ENCODE measurements at regions of chr12 and their contacts with region 1.

Region 1: DNA sequence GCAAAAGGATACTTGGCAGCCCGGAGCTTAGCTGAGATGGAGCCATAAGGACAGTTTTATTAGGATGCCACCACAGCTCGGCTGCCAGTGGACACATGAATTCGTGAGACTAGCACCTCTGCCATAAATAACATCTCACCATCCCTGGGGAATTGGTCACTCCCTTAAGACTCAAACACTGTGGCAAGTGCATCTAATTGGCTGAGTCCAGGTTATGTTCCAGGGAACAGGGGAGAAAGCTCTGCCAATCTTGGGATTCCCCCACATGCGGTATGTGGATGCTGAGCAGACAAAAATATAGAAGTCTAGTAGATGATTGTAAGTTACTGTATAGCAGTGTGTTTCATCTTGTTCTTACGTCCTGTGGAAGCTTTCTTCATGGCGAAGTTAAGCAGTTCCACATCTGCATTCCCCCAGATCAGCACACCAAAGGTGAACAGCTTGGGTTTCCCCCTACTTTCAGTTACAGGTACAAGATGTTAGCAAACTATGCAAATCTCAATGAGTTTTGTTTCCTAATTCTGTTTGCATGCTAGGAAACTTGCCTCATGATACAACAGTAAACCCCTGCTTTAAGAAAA is 131.1 kb downstream of the ETV6 start:
- DNase-seq: peak; percentile 94
- ATAC-seq: peak; percentile 79
- H3K4me3 ChIP-seq: peak overlapping the region; percentile 13; the same call in 1 of the 2 replicates
- H3K27ac ChIP-seq: peak overlapping the region; percentile 95
- H3K4me1 ChIP-seq: peaks cover 67% of the 10 kb centered on the region
- H3K27me3 ChIP-seq: no peaks in the 10 kb centered on the region
- CTCF ChIP-seq: no peak
- EP300 ChIP-seq: peak; percentile 67 to 91; a peak in 2 of 4 replicates
- POLR2A ChIP-seq: peak; percentile 48; the same call in 1 of the 2 replicates
- RAD21 ChIP-seq: 0 out of 2 replicates have a peak, but pooled peaks have one; percentile 3

Region 2: DNA sequence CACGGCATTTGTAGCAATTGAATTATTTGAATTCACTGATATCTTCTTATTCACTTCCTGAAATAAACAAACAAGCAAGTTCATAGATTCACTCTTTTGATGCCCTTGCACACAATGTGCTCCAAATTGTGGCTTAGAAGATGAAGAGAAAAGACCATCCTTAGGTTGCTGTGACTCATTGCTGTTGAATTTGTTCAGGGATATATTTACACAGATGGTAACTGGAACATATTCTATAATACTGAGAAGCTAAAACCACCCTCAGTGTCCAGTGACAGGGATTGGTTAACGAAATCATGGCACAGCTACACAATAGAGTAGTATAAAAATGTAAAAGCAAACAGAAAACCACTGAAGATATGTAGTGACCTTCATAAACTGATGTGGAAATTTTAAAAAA is 473.5 kb before region 1 on chr12:
- CTCF ChIA-PET with region 1: no interaction called
- POLR2A ChIA-PET with region 1: no interaction called
- RAD21 ChIA-PET with region 1: no interaction called
- SMC1A ChIA-PET with region 1: no interaction called
- in situ Hi-C with region 1: no loop called
- intact Hi-C with region 1: no loop called
- DNase-seq: no peak
- ATAC-seq: no peak
- H3K4me3 ChIP-seq: no peak overlapping the region
- H3K27ac ChIP-seq: no peak overlapping the region
- H3K4me1 ChIP-seq: no peaks in the 10 kb centered on the region
- H3K27me3 ChIP-seq: no peaks in the 10 kb centered on the region
- CTCF ChIP-seq: no peak
- EP300 ChIP-seq: no peak
- POLR2A ChIP-seq: no peak
- RAD21 ChIP-seq: no peak

Region 3: GRCh38 chr12:11719678-11720099 is 60.9 kb before region 1 on chr12:
- CTCF ChIA-PET with region 1: no interaction called
- POLR2A ChIA-PET with region 1: interaction called, 5 read pairs
- RAD21 ChIA-PET with region 1: no interaction called
- SMC1A ChIA-PET with region 1: interaction called, 17 read pairs
- in situ Hi-C with region 1: no loop called
- intact Hi-C with region 1: no loop called
- DNase-seq: no peak
- ATAC-seq: peak; percentile 12
- H3K4me3 ChIP-seq: no peak overlapping the region
- H3K27ac ChIP-seq: peak overlapping the region; percentile 83
- H3K4me1 ChIP-seq: peaks cover 78% of the 10 kb centered on the region
- H3K27me3 ChIP-seq: no peaks in the 10 kb centered on the region
- CTCF ChIP-seq: no peak
- EP300 ChIP-seq: no peak
- POLR2A ChIP-seq: peak; percentile 53; the same call in 1 of the 2 replicates
- RAD21 ChIP-seq: no peak

Region 4: GRCh38 chr12:11765817-11766794 is 14.5 kb before region 1 on chr12:
- CTCF ChIA-PET with region 1: interaction called, 22 read pairs
- POLR2A ChIA-PET with region 1: interaction called, 91 read pairs
- RAD21 ChIA-PET with region 1: interaction called, 212 read pairs
- SMC1A ChIA-PET with region 1: interaction called, 1,116 read pairs
- in situ Hi-C with region 1: no loop called
- intact Hi-C with region 1: loop called (anchors 1 kb)
- DNase-seq: peak; percentile 92
- ATAC-seq: peak; percentile 75
- H3K4me3 ChIP-seq: peak overlapping the region; percentile 11; the same call in 1 of the 2 replicates
- H3K27ac ChIP-seq: peak overlapping the region; percentile 100
- H3K4me1 ChIP-seq: peaks cover 92% of the 10 kb centered on the region
- H3K27me3 ChIP-seq: no peaks in the 10 kb centered on the region
- CTCF ChIP-seq: no peak
- EP300 ChIP-seq: peak; percentile 81 to 89
- POLR2A ChIP-seq: 0 out of 2 replicates have a peak, but pooled peaks have one; percentile 32
- RAD21 ChIP-seq: peak; percentile 19; the same call in 1 of the 2 replicates

Region 5: DNA sequence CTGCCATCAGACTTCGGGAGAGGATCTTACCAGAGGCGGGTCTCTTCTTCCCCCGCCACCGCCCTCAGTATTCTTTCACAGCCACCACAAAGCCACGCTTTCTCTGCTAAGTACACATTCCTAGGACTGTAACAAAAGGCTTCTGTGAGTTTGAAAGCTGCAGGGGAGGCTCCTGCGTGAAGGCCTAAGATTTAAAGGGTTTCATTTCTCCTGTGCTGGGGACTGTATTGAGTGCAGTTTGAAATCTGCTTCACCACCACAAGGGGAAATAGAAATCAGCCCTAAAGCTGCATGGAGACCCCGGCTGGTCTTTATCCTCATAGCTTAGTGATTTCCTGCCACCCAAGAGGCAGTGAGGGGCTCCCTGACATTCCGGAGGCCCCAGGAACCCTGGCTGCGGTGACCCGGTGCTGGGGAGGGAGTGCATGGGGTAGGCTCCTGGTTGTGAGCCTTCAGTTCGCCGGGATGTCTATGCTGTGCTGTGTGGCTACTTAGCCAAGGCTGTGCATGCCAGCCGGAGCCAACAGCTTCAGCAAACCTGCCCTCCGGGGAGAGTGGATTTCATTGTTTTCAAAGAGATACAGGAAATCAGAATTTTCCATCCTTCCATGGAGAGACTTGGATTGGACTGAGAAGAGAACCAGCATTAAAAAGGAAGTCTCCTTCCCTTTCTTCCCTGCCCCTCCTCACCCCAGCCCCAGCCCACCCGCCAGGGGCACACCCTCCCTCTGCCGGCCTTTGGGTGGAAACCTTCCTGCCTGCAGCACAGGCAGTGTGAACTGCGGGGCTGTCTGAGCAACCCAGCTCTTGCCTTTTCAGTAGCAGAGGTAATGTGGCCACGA is 32.2 kb after region 1 on chr12:
- CTCF ChIA-PET with region 1: interaction called, 8 read pairs
- POLR2A ChIA-PET with region 1: interaction called, 7 read pairs
- RAD21 ChIA-PET with region 1: interaction called, 37 read pairs
- SMC1A ChIA-PET with region 1: interaction called, 58 read pairs
- in situ Hi-C with region 1: no loop called
- intact Hi-C with region 1: loop called (anchors 1 kb)
- DNase-seq: no peak
- ATAC-seq: peak; percentile 89
- H3K4me3 ChIP-seq: peak overlapping the region; percentile 61
- H3K27ac ChIP-seq: peak overlapping the region; percentile 93
- H3K4me1 ChIP-seq: peaks cover 41% of the 10 kb centered on the region
- H3K27me3 ChIP-seq: no peaks in the 10 kb centered on the region
- CTCF ChIP-seq: peak; percentile 19 to 38 (median 20); a peak in 4 of 6 replicates
- EP300 ChIP-seq: no peak
- POLR2A ChIP-seq: peak; percentile 40; the same call in 1 of the 2 replicates
- RAD21 ChIP-seq: peak; percentile 34; the same call in 1 of the 2 replicates

Region 6: DNA sequence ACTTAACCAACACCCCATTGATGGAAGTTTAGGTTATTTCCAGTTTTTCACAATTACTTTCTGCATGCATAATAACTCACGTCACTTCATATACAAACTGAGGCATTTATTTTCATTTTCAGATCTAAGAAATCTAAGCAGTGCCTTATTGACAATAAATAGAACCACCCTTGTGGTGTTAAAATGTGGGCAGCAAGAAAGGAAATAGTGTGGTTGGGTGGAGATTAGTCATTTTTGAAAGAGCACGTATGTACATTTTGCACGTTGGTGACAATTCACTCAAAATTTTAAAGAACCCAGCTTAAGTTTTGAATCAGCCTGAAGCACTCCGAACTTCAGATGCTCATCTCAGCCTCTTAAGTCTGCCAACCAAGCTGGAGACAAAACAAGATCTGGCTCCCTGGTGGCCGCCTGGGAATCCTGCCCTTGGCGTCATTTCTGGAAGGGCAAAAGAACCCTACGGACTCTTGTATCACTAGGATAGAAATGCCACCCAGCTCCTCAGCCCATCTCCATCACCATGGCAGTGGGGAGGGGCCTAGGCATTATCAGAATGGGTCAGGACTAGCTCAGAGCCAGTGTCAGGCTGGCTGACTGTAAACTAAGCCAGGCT is 200.6 kb after region 1 on chr12:
- CTCF ChIA-PET with region 1: no interaction called
- POLR2A ChIA-PET with region 1: no interaction called
- RAD21 ChIA-PET with region 1: interaction called, 3 read pairs
- SMC1A ChIA-PET with region 1: interaction called, 6 read pairs
- in situ Hi-C with region 1: no loop called
- intact Hi-C with region 1: loop called (anchors 1 kb)
- DNase-seq: peak; percentile 98
- ATAC-seq: peak; percentile 90
- H3K4me3 ChIP-seq: peak overlapping the region; percentile 19; the same call in 1 of the 2 replicates
- H3K27ac ChIP-seq: peak overlapping the region; percentile 96
- H3K4me1 ChIP-seq: peaks cover 23% of the 10 kb centered on the region
- H3K27me3 ChIP-seq: no peaks in the 10 kb centered on the region
- CTCF ChIP-seq: no peak
- EP300 ChIP-seq: peak; percentile 99
- POLR2A ChIP-seq: no peak
- RAD21 ChIP-seq: peak; percentile 26; the same call in 1 of the 2 replicates

Measured in GM12878 (cell line).